Activated naive CD4-positive, alpha-beta T cell treated with anti-CD3 and anti-CD28 coated beads, Interleukin-2, amount 10 ng/mL, durations not matched to agents 7 days and 5 days (primary cell): ENCODE measurements at regions of chr17 and their contacts with region 1.

Region 1: DNA sequence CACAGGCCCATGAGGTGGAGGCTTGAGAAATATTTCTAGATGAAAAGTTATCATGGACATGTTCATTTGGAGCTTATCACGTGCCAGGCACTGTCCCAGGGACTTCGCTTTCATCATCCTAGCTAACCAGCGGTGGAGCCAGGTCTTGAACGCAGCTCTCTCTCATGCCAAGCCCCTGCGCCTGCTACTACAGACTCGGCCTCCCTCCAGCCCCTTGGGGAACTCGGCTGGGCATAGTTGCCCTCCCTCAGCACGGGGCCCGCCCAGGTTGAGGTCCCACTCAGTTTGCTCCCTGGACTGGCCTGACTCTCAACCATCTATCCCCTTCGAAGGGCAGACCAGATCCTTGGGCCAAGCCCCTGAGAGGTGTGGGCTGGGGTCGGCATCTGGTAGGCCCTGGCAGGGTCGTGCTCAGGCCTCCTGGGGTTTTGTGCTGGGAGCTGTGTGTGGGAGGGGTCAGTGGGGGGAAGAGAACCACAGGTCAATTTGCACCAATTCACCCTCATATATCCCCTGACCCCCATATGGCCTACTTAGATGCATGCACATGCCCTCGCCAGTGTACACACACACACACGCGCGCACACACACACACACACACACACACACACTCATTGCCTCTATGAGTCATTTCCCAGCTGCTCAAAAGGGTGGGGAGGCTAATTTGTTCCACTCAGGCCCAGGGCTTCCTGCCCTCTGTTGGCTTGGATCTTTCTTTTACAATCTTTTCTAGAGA is 12.1 kb upstream of the SCN4A start:
- DNase-seq: peak; percentile 76
- H3K4me3 Mint-ChIP-seq: peak overlapping the region; percentile 9
- H3K27ac Mint-ChIP-seq: peak overlapping the region; percentile 78
- H3K4me1 Mint-ChIP-seq: peaks cover 29% of the 10 kb centered on the region
- H3K27me3 Mint-ChIP-seq: peaks cover 12% of the 10 kb centered on the region

Region 2: GRCh38 chr17:63931099-63931561 is 53.7 kb before region 1 on chr17:
- CTCF ChIA-PET with region 1: interaction called, 17 read pairs
- DNase-seq: peak; percentile 82
- H3K4me3 Mint-ChIP-seq: peak overlapping the region; percentile 93
- H3K27ac Mint-ChIP-seq: peak overlapping the region; percentile 84
- H3K4me1 Mint-ChIP-seq: peaks cover 32% of the 10 kb centered on the region
- H3K27me3 Mint-ChIP-seq: peaks cover 36% of the 10 kb centered on the region

Region 3: DNA sequence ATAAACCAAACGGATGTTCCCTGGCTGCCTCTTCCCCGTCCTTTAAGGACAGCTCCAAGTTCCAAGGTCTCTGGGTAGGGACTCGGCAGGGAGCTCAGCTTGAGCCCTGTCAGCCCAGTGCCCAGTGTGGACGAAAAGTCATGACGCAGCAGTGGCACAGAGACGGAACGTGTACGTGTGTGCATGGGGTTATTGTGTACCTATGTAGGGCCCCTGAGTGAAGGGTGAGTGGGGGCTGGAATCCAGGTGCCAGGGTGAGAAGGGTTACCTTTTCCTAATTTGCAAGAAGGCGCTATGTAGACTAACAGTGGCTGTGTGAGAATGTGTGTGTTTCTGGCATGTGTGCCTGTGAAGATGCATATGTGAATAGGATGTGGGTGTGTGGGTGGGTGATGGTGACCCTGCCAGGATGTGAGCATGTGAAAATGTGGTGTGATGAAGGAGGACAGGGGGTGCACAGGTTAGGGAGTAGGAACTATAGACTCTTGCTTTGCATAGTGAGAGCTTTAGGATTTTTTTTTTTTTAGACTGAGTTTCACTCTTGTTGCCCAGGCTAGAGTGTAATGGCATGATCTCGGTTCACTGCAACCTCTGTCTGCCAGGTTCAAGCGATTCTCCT is 18.1 kb before region 1 on chr17:
- CTCF ChIA-PET with region 1: interaction called, 11 read pairs
- DNase-seq: peak; percentile 54
- H3K4me3 Mint-ChIP-seq: no peak overlapping the region
- H3K27ac Mint-ChIP-seq: no peak overlapping the region
- H3K4me1 Mint-ChIP-seq: peaks cover 9% of the 10 kb centered on the region
- H3K27me3 Mint-ChIP-seq: peaks cover 33% of the 10 kb centered on the region

Region 4: GRCh38 chr17:64020056-64020766 is 35.4 kb after region 1 on chr17 and contains the start of gene ICAM2:
- CTCF ChIA-PET with region 1: interaction called, 13 read pairs
- DNase-seq: peak; percentile 96
- H3K4me3 Mint-ChIP-seq: peak within 1 kb of the TSS; percentile 97
- H3K27ac Mint-ChIP-seq: peak within 1 kb of the TSS; percentile 100
- H3K4me1 Mint-ChIP-seq: peaks cover 72% of the 10 kb centered on the region
- H3K27me3 Mint-ChIP-seq: no peaks in the 10 kb centered on the region

Region 5: GRCh38 chr17:64063766-64064224 is 79.0 kb after region 1 on chr17:
- CTCF ChIA-PET with region 1: no interaction called
- DNase-seq: peak; percentile 76
- H3K4me3 Mint-ChIP-seq: no peak overlapping the region
- H3K27ac Mint-ChIP-seq: peak overlapping the region; percentile 29
- H3K4me1 Mint-ChIP-seq: peaks cover 79% of the 10 kb centered on the region
- H3K27me3 Mint-ChIP-seq: no peaks in the 10 kb centered on the region